Ascending aorta (tissue), 2 donors: ENCODE measurements at regions of chr12 and their contacts with region 1.

Region 1: DNA sequence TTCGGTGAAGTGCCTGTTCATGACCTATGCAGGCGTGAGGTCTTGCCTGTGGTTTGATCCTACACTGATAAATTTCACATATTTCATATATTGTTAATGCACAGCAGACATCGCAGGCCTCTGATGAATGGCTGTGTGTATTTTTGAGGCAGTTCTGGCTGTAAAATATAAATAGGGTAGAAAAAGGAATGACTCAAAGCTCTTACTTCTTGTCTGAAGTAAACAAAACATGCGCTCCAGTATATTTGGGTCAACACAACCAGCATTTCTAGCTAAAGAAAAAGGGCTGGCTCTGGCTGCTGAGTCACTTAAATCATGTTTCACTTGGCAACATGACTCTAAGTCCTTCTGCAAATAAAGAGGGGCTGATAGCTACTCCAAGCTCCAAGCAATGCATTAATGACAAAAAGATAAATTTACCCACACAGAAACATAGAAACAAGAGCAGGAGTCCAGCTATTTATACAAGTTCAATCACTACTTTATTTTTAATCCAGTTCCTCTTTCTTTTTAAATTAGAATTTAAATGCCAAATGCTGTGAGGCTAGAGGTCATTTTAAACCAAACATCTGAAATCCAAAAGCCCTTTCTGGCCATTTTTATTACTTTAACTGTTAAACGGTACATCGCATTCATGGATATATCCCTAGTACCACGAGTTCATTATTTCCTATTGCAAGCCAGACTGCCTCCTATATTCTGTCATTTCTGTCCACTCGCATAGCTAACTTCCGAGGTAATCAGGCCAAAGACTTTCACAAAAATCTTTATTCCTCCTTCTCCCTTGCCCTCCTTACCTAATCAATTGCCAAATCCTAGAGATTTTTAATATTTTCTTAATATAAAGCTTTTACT is 54.3 kb upstream of the TMCC3 start:
- DNase-seq: no peak
- H3K4me3 ChIP-seq: no peak overlapping the region
- H3K27ac ChIP-seq: no peak overlapping the region
- H3K4me1 ChIP-seq: peaks cover 0 to 12% of the 10 kb centered on the region in 2 donors
- H3K27me3 ChIP-seq: no peaks in the 10 kb centered on the region
- CTCF ChIP-seq: no peak

Region 2: DNA sequence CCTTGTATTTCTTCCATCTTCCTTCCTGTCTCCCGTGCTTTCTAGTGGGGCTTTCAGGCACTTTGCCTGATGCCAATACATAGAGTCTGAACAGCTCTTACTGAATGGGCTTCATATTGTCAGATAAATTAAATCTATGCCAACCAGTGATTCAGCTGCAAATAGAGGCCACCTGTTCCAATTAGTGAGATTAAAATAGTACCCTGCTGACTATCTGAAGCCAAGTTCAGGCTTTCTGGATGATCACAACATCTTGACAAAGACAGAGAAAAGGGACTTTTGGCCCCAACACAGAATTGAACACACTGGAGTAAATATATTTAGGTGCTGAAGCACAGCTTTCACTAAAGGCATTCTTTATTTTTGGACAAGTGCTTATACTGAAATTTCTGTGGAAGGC is 66.2 kb before region 1 on chr12:
- intact Hi-C with region 1: no loop called
- DNase-seq: no peak
- H3K4me3 ChIP-seq: no peak overlapping the region
- H3K27ac ChIP-seq: no peak overlapping the region
- H3K4me1 ChIP-seq: no peaks in the 10 kb centered on the region
- H3K27me3 ChIP-seq: no peaks in the 10 kb centered on the region
- CTCF ChIP-seq: no peak

Region 3: DNA sequence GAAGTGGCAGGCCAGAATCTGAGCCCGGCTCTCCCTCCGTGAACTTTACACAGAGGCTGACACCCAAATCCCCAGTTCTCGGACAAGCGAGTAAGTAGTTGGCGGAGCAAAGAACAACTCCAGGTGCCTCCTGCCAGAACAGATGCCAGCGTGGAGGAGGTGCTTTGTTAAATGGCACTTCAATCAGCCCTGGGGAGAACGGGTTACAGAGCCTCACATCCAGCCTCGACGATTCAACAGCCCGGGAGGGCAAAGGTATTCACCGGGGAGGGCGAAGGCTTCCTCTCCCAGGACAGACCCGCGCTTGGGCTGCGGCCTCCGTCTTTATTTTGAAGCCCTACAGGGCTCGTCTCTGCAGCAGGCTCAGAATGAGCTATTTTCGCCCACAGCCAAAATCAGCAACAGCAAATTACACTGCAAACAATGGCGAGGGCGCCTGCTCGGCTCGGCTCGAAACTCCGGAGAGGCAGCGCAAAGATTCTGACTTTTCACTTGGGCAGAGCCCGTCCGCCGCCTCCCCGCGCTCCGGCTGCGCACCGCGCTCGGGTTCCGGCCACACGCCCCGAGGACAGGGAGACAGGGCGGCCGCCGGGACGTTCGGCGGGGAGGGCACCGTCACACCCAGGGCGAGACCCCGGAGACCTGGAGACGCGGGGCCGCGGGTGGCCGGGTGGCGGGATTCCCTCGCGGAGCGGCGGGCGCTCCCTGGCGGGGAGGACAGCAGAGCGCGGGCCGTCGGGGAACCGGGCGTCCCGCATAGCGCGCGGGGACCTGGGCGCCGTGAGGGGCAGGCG is 55.1 kb before region 1 on chr12:
- intact Hi-C with region 1: loop called (anchors 5 kb)
- DNase-seq: no peak
- H3K4me3 ChIP-seq: peak overlapping the region; percentile 79 to 94
- H3K27ac ChIP-seq: peak overlapping the region; percentile 48 to 77
- H3K4me1 ChIP-seq: no peaks in the 10 kb centered on the region
- H3K27me3 ChIP-seq: no peaks in the 10 kb centered on the region
- CTCF ChIP-seq: peak in 2 of 3 experiments; percentile 26 to 47

Region 4: DNA sequence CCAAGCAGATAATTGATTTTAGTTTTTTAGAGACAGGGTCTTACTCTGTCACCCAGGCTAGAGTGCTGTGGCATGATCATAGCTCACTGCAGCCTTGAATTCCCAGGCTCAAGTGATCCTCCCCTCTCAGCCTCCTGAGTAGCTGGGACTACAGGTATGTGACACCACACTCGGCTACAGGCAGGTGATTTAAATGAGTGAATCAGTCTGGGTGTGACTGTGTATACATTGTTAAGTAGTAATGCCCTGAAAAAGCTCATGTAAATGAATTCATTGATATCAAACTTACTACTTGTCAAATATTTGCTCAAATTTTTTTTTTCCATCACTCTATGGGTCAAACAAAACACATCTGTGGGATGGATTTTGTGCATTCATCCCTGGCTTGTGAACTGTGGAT is 852.9 kb after region 1 on chr12:
- intact Hi-C with region 1: no loop called
- DNase-seq: no peak
- H3K4me3 ChIP-seq: no peak overlapping the region
- H3K27ac ChIP-seq: no peak overlapping the region
- H3K4me1 ChIP-seq: no peaks in the 10 kb centered on the region
- H3K27me3 ChIP-seq: no peaks in the 10 kb centered on the region
- CTCF ChIP-seq: no peak